Activated CD8-positive, alpha-beta T cell treated with anti-CD3 and anti-CD28 coated beads, Interleukin-2, amount 10 ng/mL, durations not matched to agents 7 days and 5 days (primary cell): ENCODE measurements at regions of chr6 and their contacts with region 1.

Region 1: DNA sequence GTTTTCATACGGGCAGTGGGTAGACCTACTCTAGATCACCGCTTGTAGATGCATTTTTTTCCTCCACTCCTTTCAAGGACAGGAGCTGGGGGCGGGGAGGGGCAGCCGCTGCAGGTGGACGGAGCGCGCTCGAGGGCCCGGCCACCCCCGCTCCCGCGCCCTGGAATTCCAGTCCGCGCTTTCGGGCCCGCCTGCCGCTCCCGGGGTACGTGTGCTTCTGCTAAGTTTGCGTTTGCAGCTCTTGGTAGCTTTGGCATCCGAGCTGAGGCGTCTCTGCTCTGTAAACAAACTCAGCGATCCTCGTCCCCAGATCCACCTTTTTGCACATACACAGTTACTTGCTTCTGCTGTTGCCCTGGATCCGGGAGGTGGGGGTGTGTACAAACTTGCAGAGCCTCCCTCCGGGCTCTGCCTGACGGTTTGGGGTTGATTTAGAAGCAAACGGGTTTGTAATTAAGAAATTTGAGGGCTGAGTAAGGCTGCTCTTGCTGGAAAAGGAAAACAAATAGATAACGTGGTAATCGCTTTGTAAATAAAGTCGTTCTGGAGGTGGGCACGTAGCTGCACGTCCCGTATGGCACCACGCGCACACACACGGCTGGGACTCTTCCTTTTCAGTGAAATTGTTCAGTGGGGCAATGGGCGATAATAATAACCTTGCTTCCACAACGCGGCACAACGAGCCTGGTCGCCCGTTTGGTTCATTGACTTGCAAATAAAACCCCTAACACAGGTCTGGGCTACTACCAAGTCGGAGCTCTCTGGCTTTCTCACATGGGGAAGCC is 976 bp upstream of the CITED2 start:
- DNase-seq: peak; percentile 88
- ATAC-seq: peak; percentile 54
- H3K4me3 Mint-ChIP-seq: peak overlapping the region; percentile 99
- H3K27ac Mint-ChIP-seq: peak overlapping the region; percentile 100
- H3K4me1 Mint-ChIP-seq: peaks cover 34% of the 10 kb centered on the region
- H3K27me3 Mint-ChIP-seq: no peaks in the 10 kb centered on the region

Region 2: GRCh38 chr6:138773177-138774091 is 602.0 kb before region 1 on chr6 and contains the start of gene CCDC28A:
- CTCF ChIA-PET with region 1: no interaction called
- POLR2A ChIA-PET with region 1: interaction called, 23 read pairs
- DNase-seq: peak; percentile 95
- ATAC-seq: peak; percentile 89
- H3K4me3 Mint-ChIP-seq: peak within 1 kb of the TSS; percentile 95
- H3K27ac Mint-ChIP-seq: peak within 1 kb of the TSS; percentile 100
- H3K4me1 Mint-ChIP-seq: peaks cover 18% of the 10 kb centered on the region
- H3K27me3 Mint-ChIP-seq: no peaks in the 10 kb centered on the region
- total RNA-seq, gene CCDC28A: 17.4 to 19.2 TPM

Region 3: DNA sequence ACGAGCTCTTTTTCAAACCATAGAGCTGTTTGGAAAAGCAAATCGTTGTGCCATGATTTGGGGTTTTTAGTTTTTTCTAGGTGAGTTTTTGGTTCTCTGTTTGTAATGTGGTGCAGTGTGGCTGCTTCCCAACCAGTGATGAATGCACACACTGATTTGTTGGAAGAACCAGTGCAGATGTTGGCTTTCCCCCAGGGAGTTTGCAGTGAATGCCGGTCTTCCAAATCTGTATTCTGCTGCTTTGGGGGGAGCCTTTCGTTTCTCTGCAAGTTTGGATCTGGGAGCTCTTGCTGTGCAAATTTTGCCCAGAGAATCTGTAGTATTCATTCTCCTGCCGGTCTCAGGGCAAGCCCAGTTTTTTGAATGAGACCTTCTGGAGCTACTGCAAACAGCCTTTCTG is 226.0 kb before region 1 on chr6:
- CTCF ChIA-PET with region 1: interaction called, 5 read pairs
- POLR2A ChIA-PET with region 1: interaction called, 15 read pairs
- DNase-seq: no peak
- ATAC-seq: no peak
- H3K4me3 Mint-ChIP-seq: no peak overlapping the region
- H3K27ac Mint-ChIP-seq: peak overlapping the region; percentile 63
- H3K4me1 Mint-ChIP-seq: peaks cover 89% of the 10 kb centered on the region
- H3K27me3 Mint-ChIP-seq: no peaks in the 10 kb centered on the region

Region 4: GRCh38 chr6:139308286-139308916 is 67.0 kb before region 1 on chr6:
- CTCF ChIA-PET with region 1: no interaction called
- POLR2A ChIA-PET with region 1: no interaction called
- DNase-seq: no peak
- ATAC-seq: no peak
- H3K4me3 Mint-ChIP-seq: no peak overlapping the region
- H3K27ac Mint-ChIP-seq: no peak overlapping the region
- H3K4me1 Mint-ChIP-seq: no peaks in the 10 kb centered on the region
- H3K27me3 Mint-ChIP-seq: peaks cover 4% of the 10 kb centered on the region

Region 5: GRCh38 chr6:139533573-139534471 is 158.4 kb after region 1 on chr6:
- CTCF ChIA-PET with region 1: interaction called, 8 read pairs
- POLR2A ChIA-PET with region 1: interaction called, 17 read pairs
- DNase-seq: no peak
- ATAC-seq: peak; percentile 16
- H3K4me3 Mint-ChIP-seq: no peak overlapping the region
- H3K27ac Mint-ChIP-seq: peak overlapping the region; percentile 86
- H3K4me1 Mint-ChIP-seq: peaks cover 35% of the 10 kb centered on the region
- H3K27me3 Mint-ChIP-seq: no peaks in the 10 kb centered on the region

Region 6: DNA sequence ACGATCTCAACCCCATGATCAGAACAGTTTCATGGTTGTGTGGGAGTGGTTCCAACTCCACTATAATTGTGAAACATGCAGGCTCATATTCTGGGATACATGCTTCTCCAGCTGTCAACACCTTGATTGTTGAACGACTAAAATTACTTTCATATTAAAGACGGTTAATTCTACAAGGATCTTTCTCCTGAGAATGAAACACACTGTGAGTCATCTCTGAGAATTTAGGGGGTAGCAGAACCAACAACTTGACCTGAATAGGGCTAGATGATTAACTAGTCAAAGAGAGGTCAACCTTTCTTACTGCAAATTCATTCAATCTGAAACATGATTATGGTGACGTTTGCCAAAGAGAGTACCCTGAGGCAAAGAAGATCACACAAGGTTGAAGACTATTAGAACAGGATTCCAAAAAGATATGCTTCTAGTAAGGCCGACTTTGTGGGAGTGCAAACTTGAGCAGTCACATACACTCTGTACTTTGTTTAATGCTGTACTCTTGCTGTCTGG is 174.2 kb after region 1 on chr6:
- CTCF ChIA-PET with region 1: no interaction called
- POLR2A ChIA-PET with region 1: no interaction called
- DNase-seq: no peak
- ATAC-seq: no peak
- H3K4me3 Mint-ChIP-seq: no peak overlapping the region
- H3K27ac Mint-ChIP-seq: no peak overlapping the region
- H3K4me1 Mint-ChIP-seq: no peaks in the 10 kb centered on the region
- H3K27me3 Mint-ChIP-seq: peaks cover 6% of the 10 kb centered on the region